ENCODE measurements at regions of chr16 and their contacts with region 1.

Region 1: DNA sequence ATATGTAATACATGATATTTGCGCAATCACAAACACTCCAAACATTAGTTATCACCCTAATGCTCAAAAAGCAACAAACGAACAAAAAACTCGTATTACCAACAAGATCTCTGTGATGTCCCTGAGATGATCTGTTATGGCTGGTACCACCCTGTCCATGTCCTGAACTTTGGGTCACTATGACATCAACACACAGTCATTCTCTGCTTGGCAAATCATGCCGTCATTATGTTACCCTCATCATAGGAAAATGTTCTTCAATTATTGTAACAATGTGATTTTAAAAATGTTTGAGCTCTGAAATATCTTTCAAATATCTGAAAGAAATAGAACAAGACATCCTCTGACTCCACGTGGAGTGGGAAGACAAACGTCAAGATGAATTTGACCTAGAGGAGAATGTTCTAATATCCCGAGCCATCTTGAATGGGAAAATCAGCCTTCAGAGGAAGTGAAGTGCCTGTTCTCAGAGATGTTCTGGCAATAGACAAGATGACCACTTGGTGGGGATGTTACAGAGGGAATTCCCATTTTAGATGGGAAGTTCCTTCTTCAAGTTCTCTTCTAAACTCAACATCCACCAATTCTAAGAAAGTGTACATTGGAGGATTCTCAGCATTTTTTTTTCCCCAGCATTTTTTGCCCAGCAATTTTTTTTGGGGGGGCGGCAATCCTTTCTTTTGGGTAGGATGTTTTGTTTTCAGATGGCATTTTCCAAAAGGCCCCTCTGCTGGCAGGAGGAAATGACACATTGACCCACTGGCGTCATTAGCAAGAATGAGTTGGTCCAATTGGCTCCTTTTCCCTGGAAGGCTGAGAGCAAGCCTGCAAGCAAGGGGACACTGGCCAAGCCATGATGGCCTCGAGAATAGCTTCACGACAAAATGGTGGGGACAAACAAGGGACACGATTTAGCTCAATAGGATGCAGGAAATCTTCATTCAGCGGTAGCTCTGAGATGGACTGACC is 3.7 kb upstream of the HSD17B2 start:
- DNase-seq: peak in 1 of 2 experiments; percentile 70
- H3K4me3 ChIP-seq: no peak overlapping the region
- H3K4me3 Mint-ChIP-seq: no peak overlapping the region
- H3K27ac Mint-ChIP-seq: no peak overlapping the region
- H3K4me1 ChIP-seq: peaks cover 24% of the 10 kb centered on the region
- H3K4me1 Mint-ChIP-seq: peaks cover 32% of the 10 kb centered on the region
- H3K27me3 ChIP-seq: no peaks in the 10 kb centered on the region
- H3K27me3 Mint-ChIP-seq: no peaks in the 10 kb centered on the region
- CTCF ChIP-seq: peak; percentile 80 to 87

Region 2: GRCh38 chr16:81940781-81941560 is 90.4 kb before region 1 on chr16:
- CTCF ChIA-PET with region 1: no interaction called
- POLR2A ChIA-PET with region 1: no interaction called
- intact Hi-C with region 1: loop called (anchors 1 kb)
- DNase-seq: peak in 1 of 2 experiments; percentile 43
- H3K4me3 ChIP-seq: no peak overlapping the region
- H3K4me3 Mint-ChIP-seq: no peak overlapping the region
- H3K27ac Mint-ChIP-seq: no peak overlapping the region
- H3K4me1 ChIP-seq: no peaks in the 10 kb centered on the region
- H3K4me1 Mint-ChIP-seq: peaks cover 7% of the 10 kb centered on the region
- H3K27me3 ChIP-seq: no peaks in the 10 kb centered on the region
- H3K27me3 Mint-ChIP-seq: no peaks in the 10 kb centered on the region
- CTCF ChIP-seq: peak; percentile 51 to 55

Region 3: GRCh38 chr16:82050909-82051357 is 19.5 kb after region 1 on chr16:
- CTCF ChIA-PET with region 1: interaction called, 5 read pairs
- POLR2A ChIA-PET with region 1: no interaction called
- intact Hi-C with region 1: loop called (anchors 1 kb)
- DNase-seq: peak in 1 of 2 experiments; percentile 67
- H3K4me3 ChIP-seq: no peak overlapping the region
- H3K4me3 Mint-ChIP-seq: peak overlapping the region; percentile 56
- H3K27ac Mint-ChIP-seq: peak overlapping the region; percentile 84
- H3K4me1 ChIP-seq: peaks cover 72% of the 10 kb centered on the region
- H3K4me1 Mint-ChIP-seq: peaks cover 68% of the 10 kb centered on the region
- H3K27me3 ChIP-seq: no peaks in the 10 kb centered on the region
- H3K27me3 Mint-ChIP-seq: no peaks in the 10 kb centered on the region
- CTCF ChIP-seq: no peak

Region 4: GRCh38 chr16:82061861-82062525 is 30.6 kb after region 1 on chr16:
- CTCF ChIA-PET with region 1: interaction called, 5 read pairs
- POLR2A ChIA-PET with region 1: no interaction called
- intact Hi-C with region 1: loop called (anchors 1 kb)
- DNase-seq: peak in 1 of 2 experiments; percentile 36
- H3K4me3 ChIP-seq: no peak overlapping the region
- H3K4me3 Mint-ChIP-seq: no peak overlapping the region
- H3K27ac Mint-ChIP-seq: no peak overlapping the region
- H3K4me1 ChIP-seq: peaks cover 28% of the 10 kb centered on the region
- H3K4me1 Mint-ChIP-seq: peaks cover 30% of the 10 kb centered on the region
- H3K27me3 ChIP-seq: no peaks in the 10 kb centered on the region; the same call in none of the 2 replicates
- H3K27me3 Mint-ChIP-seq: no peaks in the 10 kb centered on the region
- CTCF ChIP-seq: peak; percentile 49 to 53

Region 5: GRCh38 chr16:82111944-82112343 is 80.5 kb after region 1 on chr16:
- CTCF ChIA-PET with region 1: no interaction called
- POLR2A ChIA-PET with region 1: no interaction called
- intact Hi-C with region 1: no loop called
- DNase-seq: no peak
- H3K4me3 ChIP-seq: no peak overlapping the region
- H3K4me3 Mint-ChIP-seq: no peak overlapping the region
- H3K27ac Mint-ChIP-seq: no peak overlapping the region
- H3K4me1 ChIP-seq: no peaks in the 10 kb centered on the region
- H3K4me1 Mint-ChIP-seq: no peaks in the 10 kb centered on the region
- H3K27me3 ChIP-seq: no peaks in the 10 kb centered on the region
- H3K27me3 Mint-ChIP-seq: no peaks in the 10 kb centered on the region
- CTCF ChIP-seq: no peak

Region 6: DNA sequence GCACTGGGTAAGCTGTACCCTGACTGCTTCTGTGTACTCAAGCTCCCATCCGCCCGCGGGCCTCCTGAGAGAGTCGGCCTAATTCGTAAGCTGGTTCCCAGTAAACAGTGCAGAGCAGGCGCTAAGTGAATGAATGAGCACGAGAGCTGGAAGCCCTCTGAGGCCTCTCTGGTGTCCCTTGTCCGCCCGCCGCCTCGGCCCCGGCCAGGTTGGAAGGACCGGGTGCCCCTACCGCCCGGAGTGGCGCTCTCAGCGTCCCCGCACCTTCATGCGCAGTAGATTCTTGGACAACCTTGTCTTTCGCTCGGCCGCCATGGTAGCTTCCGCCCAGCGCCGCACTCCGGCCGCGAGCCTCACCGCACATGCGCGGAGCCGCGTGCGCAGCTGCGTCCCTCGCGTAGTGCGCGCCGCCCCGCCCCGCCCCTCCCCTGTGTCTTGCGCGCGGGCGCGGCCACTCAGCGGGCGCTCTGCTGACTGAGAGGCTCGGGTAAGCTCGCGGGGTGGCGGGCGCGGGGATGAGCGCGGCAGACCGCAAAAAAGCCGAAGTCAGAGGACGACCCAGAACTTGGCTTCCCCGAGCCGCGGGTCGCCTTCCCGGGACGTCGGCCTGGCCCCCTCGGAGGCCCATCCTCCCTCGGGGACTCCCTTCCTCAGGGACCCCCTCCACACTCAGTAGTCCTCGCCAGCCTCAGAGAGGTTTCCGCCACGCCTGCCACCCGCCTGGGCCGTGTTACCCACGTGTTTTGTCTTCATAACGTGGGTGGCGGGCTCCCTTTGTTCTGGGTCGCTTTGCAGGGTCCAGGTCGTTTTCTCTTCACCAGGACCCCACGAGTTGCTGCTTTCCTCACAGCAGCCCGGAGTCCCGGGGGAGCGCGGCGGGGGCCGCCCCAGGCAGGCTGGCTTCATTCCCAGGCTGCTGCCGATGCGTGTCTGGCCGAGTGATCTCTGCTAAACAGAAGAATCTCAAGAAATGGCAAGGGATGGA is 138.8 kb after region 1 on chr16 and contains the start of gene MPHOSPH6:
- CTCF ChIA-PET with region 1: no interaction called
- POLR2A ChIA-PET with region 1: no interaction called
- intact Hi-C with region 1: loop called (anchors 1 kb)
- DNase-seq: peak; percentile 90 to 94
- H3K4me3 ChIP-seq: peak within 1 kb of the TSS; percentile 79
- H3K4me3 Mint-ChIP-seq: peak within 1 kb of the TSS; percentile 92
- H3K27ac Mint-ChIP-seq: peak within 1 kb of the TSS; percentile 94
- H3K4me1 ChIP-seq: peaks cover 8% of the 10 kb centered on the region
- H3K4me1 Mint-ChIP-seq: peaks cover 7% of the 10 kb centered on the region
- H3K27me3 ChIP-seq: no peaks in the 10 kb centered on the region
- H3K27me3 Mint-ChIP-seq: peaks cover 11% of the 10 kb centered on the region
- CTCF ChIP-seq: no peak
- total RNA-seq, gene MPHOSPH6: 41.9 and 42.3 TPM in 2 replicates

Region 7: GRCh38 chr16:82229796-82230619 is 198.6 kb after region 1 on chr16:
- CTCF ChIA-PET with region 1: interaction called, 42 read pairs
- POLR2A ChIA-PET with region 1: no interaction called
- intact Hi-C with region 1: loop called (anchors 1 kb)
- DNase-seq: peak; percentile 77 to 84
- H3K4me3 ChIP-seq: no peak overlapping the region
- H3K4me3 Mint-ChIP-seq: no peak overlapping the region
- H3K27ac Mint-ChIP-seq: no peak overlapping the region
- H3K4me1 ChIP-seq: no peaks in the 10 kb centered on the region
- H3K4me1 Mint-ChIP-seq: no peaks in the 10 kb centered on the region
- H3K27me3 ChIP-seq: no peaks in the 10 kb centered on the region
- H3K27me3 Mint-ChIP-seq: peaks cover 9% of the 10 kb centered on the region
- CTCF ChIP-seq: peak; percentile 97 to 98

Region 8: GRCh38 chr16:82699711-82700495 is 668.5 kb after region 1 on chr16:
- CTCF ChIA-PET with region 1: no interaction called
- POLR2A ChIA-PET with region 1: no interaction called
- intact Hi-C with region 1: no loop called
- DNase-seq: no peak
- H3K4me3 ChIP-seq: no peak overlapping the region
- H3K4me3 Mint-ChIP-seq: no peak overlapping the region
- H3K27ac Mint-ChIP-seq: no peak overlapping the region
- H3K4me1 ChIP-seq: no peaks in the 10 kb centered on the region
- H3K4me1 Mint-ChIP-seq: no peaks in the 10 kb centered on the region
- H3K27me3 ChIP-seq: no peaks in the 10 kb centered on the region
- H3K27me3 Mint-ChIP-seq: peaks cover 6% of the 10 kb centered on the region
- CTCF ChIP-seq: no peak

Measured in Caco-2 (cell line).